ENCODE measurements at regions of chr2 and their contacts with region 1.

Region 1: GRCh38 chr2:68196120-68196716 is 38.5 kb downstream of the PNO1 start:
- DNase-seq: peak in 1 of 2 donors; percentile 19
- ATAC-seq: no peak

Region 2: GRCh38 chr2:68244456-68244855 is 48.2 kb after region 1 on chr2:
- intact Hi-C with region 1: loop called in 1 of 2 experiments (anchors 10 kb)
- DNase-seq: no peak
- ATAC-seq: no peak

Region 3: DNA sequence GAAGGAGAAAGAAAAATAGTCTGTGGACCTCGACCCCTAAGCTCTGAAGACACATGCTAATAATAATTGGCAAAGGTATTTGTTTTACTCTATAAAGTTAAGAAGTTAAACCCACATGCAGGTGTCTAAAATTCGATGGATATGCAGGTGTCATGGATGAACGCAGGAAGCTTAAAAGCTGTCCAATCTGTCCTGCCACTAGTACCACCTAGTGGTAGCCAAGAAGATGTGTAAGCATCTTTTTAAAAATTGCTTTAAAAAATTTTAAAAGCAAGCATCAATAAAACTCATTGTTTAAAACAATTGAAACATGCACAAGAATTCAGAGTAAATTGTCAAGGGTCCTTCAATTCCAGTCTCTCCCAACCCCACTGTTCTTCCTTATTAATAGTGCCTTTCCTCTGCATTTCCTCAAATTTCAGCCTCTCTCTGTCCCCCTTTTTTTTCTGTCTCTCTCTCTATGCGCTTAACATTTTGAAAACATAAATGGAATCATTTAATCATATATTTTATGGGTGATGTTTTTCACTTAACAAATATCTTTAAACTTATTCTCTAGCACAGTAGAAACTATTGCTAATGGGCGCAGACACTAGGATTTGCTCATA is 86.7 kb after region 1 on chr2:
- intact Hi-C with region 1: loop called in 1 of 2 experiments (anchors 10 kb)
- DNase-seq: no peak
- ATAC-seq: peak; percentile 71

Region 4: GRCh38 chr2:68909793-68910674 is 713.8 kb after region 1 on chr2:
- intact Hi-C with region 1: no loop called
- DNase-seq: peak; percentile 59 to 86
- ATAC-seq: peak; percentile 61

Measured in left colon (tissue), 2 donors.